ENCODE measurements at regions of chr17 and their contacts with region 1.

Region 1: DNA sequence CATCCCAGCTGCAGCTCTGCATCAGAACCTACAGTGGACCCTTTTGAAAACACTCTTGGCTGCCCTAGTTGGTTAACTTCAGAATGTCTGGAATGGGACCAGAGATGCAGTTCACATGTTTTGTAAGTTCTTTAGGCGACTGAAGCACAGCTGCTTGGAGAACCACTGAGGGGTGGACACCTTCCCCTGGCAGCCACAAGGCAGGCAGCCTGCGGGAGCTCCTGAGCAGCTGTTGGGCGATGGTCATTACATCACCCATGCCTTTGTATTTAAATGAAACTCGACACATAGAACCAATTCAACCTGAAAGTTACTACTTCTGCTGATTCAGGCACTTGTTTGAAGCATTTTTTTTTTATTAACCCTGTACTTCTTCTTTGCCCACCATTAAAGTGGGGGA is 151.5 kb downstream of the LGALS9B start:
- DNase-seq: no peak
- ATAC-seq: no peak
- H3K4me3 ChIP-seq: no peak overlapping the region
- H3K27ac ChIP-seq: no peak overlapping the region
- H3K4me1 ChIP-seq: no peaks in the 10 kb centered on the region
- H3K27me3 ChIP-seq: no peaks in the 10 kb centered on the region
- CTCF ChIP-seq: no peak

Region 2: GRCh38 chr17:20234276-20234675 is 81.5 kb before region 1 on chr17:
- intact Hi-C with region 1: loop called (anchors 5 to 10 kb)
- DNase-seq: no peak
- ATAC-seq: no peak
- H3K4me3 ChIP-seq: no peak overlapping the region
- H3K27ac ChIP-seq: no peak overlapping the region
- H3K4me1 ChIP-seq: no peaks in the 10 kb centered on the region
- H3K27me3 ChIP-seq: no peaks in the 10 kb centered on the region
- CTCF ChIP-seq: no peak

Region 3: DNA sequence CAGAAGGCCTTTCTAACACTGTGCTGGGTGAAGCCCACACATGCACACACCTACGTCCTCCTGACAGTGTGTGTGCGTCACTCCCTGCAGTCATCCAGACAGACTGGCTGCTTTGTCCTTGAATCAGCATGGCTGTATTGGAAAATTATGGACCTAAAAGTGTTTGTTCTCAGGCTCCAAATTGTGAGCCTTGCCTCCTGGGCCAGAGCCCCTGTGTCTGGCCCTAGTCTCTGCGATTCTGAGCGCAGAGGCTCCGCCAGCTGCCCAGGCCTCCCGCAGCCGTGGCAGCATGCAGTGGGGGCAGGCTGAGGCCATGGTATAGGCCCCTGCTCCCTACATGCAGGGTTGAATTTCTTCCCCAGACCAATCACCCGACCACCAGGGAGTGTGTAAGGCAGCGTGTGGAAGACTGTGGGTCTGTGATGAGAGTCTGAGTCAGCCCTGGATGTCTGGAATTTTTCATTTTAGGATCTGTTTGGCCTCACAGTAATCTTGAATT is 15.3 kb before region 1 on chr17:
- intact Hi-C with region 1: no loop called
- DNase-seq: no peak
- ATAC-seq: no peak
- H3K4me3 ChIP-seq: no peak overlapping the region
- H3K27ac ChIP-seq: no peak overlapping the region
- H3K4me1 ChIP-seq: no peaks in the 10 kb centered on the region
- H3K27me3 ChIP-seq: no peaks in the 10 kb centered on the region
- CTCF ChIP-seq: no peak